Posterior vena cava (tissue), 2 donors: ENCODE measurements at regions of chr11 and their contacts with region 1.

Region 1: GRCh38 chr11:111081021-111081511 is 164.5 kb upstream of the POU2AF2 start:
- DNase-seq: no peak

Region 2: GRCh38 chr11:109173504-109173903 is 1907.6 kb before region 1 on chr11:
- intact Hi-C with region 1: no loop called
- DNase-seq: no peak

Region 3: GRCh38 chr11:110797453-110797852 is 283.6 kb before region 1 on chr11:
- intact Hi-C with region 1: no loop called
- DNase-seq: no peak

Region 4: DNA sequence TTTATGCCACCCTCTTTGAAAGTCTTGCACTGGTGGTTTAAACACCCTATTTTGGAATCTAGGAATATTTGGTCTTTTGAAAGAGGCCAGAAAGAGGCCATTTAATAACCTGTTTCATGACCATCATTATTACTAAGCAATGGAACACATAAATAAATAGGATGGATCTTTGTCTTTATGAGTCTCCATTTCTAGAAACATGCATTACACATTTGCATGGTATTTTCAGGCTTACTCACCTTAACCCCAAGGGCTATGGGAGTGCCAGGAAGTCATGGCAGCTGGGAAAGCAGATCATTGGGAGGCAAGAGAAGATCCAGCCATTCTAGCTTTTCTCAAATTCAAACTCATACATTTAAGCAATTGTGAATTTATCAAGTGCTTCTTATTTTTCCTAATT is 21.3 kb before region 1 on chr11:
- intact Hi-C with region 1: loop called in 1 of 2 experiments (anchors 1 kb)
- DNase-seq: no peak